Activated naive CD4-positive, alpha-beta T cell treated with anti-CD3 and anti-CD28 coated beads for 36 hours (primary cell): ENCODE measurements at regions of chr6 and their contacts with region 1.

Region 1: GRCh38 chr6:10694302-10695085 is at the starts of genes C6orf52 and PAK1IP1:
- DNase-seq: peak; percentile 94
- H3K4me3 Mint-ChIP-seq: peak within 1 kb of the TSS; percentile 97
- H3K27ac Mint-ChIP-seq: peak within 1 kb of the TSS; percentile 98
- H3K4me1 Mint-ChIP-seq: peaks cover 40% of the 10 kb centered on the region
- H3K27me3 Mint-ChIP-seq: no peaks in the 10 kb centered on the region
- total RNA-seq, gene C6orf52: 1.3 to 3.9 TPM
- total RNA-seq, gene PAK1IP1: 28.6 to 29.2 TPM

Region 2: DNA sequence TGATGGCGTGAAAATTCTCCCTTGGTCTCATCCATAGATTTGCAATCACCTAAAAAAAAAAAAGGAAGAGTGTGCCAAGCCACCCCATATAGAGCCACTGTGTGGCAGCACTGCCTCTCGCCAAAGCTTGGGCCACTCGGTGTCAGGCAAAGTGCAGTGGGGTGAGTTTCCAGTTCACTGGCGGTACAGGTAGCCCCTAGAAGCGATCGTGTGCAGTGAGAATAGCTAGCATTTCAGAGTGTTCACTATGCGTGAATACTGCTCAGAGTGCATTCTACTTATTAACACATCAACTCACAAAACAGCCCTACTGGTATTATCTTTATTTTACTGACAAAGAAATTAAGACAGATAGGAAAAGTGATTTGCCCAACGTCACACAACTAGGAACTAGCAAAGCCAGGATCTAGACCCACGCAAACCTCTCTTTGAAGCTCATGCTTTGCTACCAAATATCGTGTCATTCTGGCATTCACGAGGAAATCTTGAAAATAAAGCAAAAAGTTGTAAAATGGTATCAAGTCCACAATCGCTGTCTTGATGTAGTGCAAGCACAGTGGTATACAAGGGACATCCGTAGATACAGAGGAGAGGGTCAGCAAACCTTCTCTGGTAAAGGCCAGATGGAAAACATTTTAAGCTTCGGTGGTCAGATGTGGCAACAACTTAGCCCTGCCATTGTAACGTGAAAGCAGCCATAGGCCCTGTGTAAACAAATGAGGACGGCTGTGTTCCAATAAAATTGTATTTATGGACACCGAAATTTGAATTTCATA is 183.7 kb before region 1 on chr6:
- CTCF ChIA-PET with region 1: no interaction called
- intact Hi-C with region 1: loop called (anchors 1 kb)
- DNase-seq: peak; percentile 70
- H3K4me3 Mint-ChIP-seq: no peak overlapping the region
- H3K27ac Mint-ChIP-seq: no peak overlapping the region
- H3K4me1 Mint-ChIP-seq: no peaks in the 10 kb centered on the region
- H3K27me3 Mint-ChIP-seq: peaks cover 5% of the 10 kb centered on the region

Region 3: GRCh38 chr6:10655508-10656055 is 38.9 kb before region 1 on chr6:
- CTCF ChIA-PET with region 1: no interaction called
- intact Hi-C with region 1: loop called (anchors 2 kb)
- DNase-seq: peak; percentile 63
- H3K4me3 Mint-ChIP-seq: peak overlapping the region; percentile 9
- H3K27ac Mint-ChIP-seq: no peak overlapping the region
- H3K4me1 Mint-ChIP-seq: peaks cover 15% of the 10 kb centered on the region
- H3K27me3 Mint-ChIP-seq: peaks cover 28% of the 10 kb centered on the region

Region 4: GRCh38 chr6:10747251-10747972 is 52.9 kb after region 1 on chr6 and contains the start of gene TMEM14B:
- CTCF ChIA-PET with region 1: no interaction called
- intact Hi-C with region 1: loop called (anchors 1 kb)
- DNase-seq: peak; percentile 100
- H3K4me3 Mint-ChIP-seq: peak within 1 kb of the TSS; percentile 91
- H3K27ac Mint-ChIP-seq: peak within 1 kb of the TSS; percentile 92
- H3K4me1 Mint-ChIP-seq: peaks cover 48% of the 10 kb centered on the region
- H3K27me3 Mint-ChIP-seq: no peaks in the 10 kb centered on the region
- total RNA-seq, gene TMEM14B: 78.7 to 79.5 TPM

Region 5: GRCh38 chr6:10837995-10838793 is 143.7 kb after region 1 on chr6 and contains the start of gene MAK:
- CTCF ChIA-PET with region 1: no interaction called
- intact Hi-C with region 1: loop called (anchors 1 kb)
- DNase-seq: peak; percentile 86
- H3K4me3 Mint-ChIP-seq: peak within 1 kb of the TSS; percentile 74
- H3K27ac Mint-ChIP-seq: peak within 1 kb of the TSS; percentile 85
- H3K4me1 Mint-ChIP-seq: peaks cover 17% of the 10 kb centered on the region
- H3K27me3 Mint-ChIP-seq: peaks cover 50% of the 10 kb centered on the region
- total RNA-seq, gene MAK: 0.12 to 0.14 TPM

Region 6: GRCh38 chr6:10852361-10852960 is 158.0 kb after region 1 on chr6:
- CTCF ChIA-PET with region 1: no interaction called
- intact Hi-C with region 1: no loop called
- DNase-seq: no peak
- H3K4me3 Mint-ChIP-seq: no peak overlapping the region
- H3K27ac Mint-ChIP-seq: no peak overlapping the region
- H3K4me1 Mint-ChIP-seq: no peaks in the 10 kb centered on the region
- H3K27me3 Mint-ChIP-seq: peaks cover 13% of the 10 kb centered on the region

Region 7: DNA sequence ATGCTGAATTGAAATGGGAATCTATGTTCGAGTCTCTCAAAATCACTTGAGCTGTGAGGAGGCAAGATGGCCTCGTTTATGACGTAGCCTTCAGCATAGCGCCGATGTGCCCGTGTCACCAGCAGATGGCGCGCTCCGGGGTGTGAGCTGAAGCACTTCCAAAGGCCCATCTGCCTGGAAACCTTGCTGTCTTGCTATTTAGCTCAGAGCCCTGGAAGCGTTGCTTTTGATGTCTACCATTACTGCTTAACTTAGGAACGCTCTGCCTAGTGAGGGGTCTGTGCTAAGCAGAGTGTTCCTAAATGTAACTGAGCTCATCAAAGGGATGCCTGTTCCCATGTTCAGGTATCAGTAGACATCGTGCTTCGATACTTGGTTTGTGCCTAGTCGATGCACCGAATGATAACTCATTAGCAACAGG is 260.1 kb after region 1 on chr6:
- CTCF ChIA-PET with region 1: no interaction called
- intact Hi-C with region 1: no loop called
- DNase-seq: peak; percentile 84
- H3K4me3 Mint-ChIP-seq: no peak overlapping the region
- H3K27ac Mint-ChIP-seq: no peak overlapping the region
- H3K4me1 Mint-ChIP-seq: no peaks in the 10 kb centered on the region
- H3K27me3 Mint-ChIP-seq: peaks cover 16% of the 10 kb centered on the region